ENCODE measurements at regions of chr20 and their contacts with region 1.

Region 1: GRCh38 chr20:63951398-63952209 is 4.6 kb downstream of the UCKL1 start:
- DNase-seq: no peak
- ATAC-seq: peak; percentile 3

Region 2: DNA sequence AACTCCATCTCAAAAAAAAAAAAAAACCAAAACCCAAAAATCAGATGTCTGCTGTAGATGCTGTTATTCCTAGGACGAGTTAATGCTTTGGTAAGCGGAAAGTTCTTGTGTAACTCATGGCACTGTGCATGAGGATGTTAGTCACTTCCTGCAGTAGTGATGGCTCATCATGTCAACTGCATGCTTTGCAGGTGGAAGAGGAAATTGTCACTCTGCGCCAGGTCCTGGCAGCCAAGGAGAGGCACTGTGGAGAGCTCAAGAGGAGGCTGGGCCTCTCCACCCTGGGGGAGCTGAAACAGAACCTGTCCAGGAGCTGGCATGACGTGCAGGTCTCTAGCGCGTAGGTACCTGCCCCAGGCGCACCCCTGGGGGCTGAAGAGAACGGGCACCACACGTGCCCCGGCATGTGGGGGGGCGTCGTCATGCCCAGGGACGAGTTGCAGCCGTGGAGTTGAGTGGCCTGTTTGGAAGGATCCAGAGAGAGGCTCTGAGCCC is 78.1 kb before region 1 on chr20:
- intact Hi-C with region 1: no loop called
- DNase-seq: peak; percentile 79
- ATAC-seq: peak; percentile 69

Region 3: GRCh38 chr20:63930971-63931553 is 20.5 kb before region 1 on chr20:
- intact Hi-C with region 1: loop called (anchors 1 kb)
- DNase-seq: peak; percentile 83
- ATAC-seq: peak; percentile 94